Gastrocnemius medialis (tissue), 4 donors: ENCODE measurements at regions of chr11 and their contacts with region 1.

Region 1: GRCh38 chr11:88292171-88292843 is 45.2 kb downstream of the CTSC start:
- DNase-seq: no peak
- ATAC-seq: peak in 1 of 2 donors; percentile 46
- H3K4me3 ChIP-seq: no peak overlapping the region
- H3K27ac ChIP-seq: peak overlapping the region in 1 of 4 donors; percentile 10
- H3K4me1 ChIP-seq: peaks cover 20 to 34% of the 10 kb centered on the region in 2 donors
- H3K27me3 ChIP-seq: no peaks in the 10 kb centered on the region
- CTCF ChIP-seq: no peak
- POLR2A ChIP-seq: no peak

Region 2: DNA sequence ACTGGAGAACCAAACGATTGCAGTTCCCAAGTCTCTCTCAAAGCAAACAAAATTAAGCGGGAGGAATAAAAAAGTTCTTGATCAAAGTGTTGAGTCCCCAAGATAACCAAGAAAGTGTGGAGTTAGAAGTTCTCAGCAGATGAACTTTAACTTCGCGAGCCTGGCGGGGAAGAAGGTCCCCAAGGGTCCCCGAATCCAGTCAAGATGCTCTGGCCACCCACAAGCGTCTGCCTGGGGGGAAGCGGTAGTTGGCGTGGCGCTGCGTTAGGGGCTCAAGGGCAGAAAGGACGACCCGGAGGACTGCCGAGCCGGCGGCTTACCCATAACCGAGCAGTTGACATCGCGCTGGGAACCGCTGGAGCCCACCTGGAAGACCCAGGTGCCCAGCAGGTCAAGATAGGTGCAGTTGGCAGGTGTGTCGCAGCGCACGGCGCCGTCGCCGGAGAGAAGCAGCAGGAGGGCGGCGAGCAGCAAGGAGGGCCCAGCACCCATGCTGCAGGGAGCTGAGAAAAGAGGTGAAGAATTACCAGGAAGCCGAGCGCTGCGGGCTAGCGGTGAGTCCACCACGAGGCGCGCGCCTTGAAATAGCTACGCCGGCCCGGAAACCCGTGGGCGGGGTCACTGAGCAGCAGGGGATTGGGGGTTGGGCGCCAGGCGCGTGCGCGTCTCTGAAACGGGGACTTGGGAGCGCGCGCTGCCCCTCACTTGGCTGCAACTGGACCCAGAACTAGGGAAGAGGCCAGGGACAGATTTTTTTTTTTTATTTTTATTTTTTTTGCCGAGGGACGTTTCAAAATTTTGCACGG is 45.1 kb after region 1 on chr11 and contains the start of gene CTSC:
- in situ Hi-C with region 1: no loop called
- intact Hi-C with region 1: loop called (anchors 5 kb)
- DNase-seq: peak; percentile 89 to 90
- ATAC-seq: peak; percentile 87 to 90
- H3K4me3 ChIP-seq: peak within 1 kb of the TSS; percentile 69 to 94 (median 88)
- H3K27ac ChIP-seq: peak within 1 kb of the TSS; percentile 81 to 89 (median 86)
- H3K4me1 ChIP-seq: peaks cover 5 to 13% of the 10 kb centered on the region in 2 donors
- H3K27me3 ChIP-seq: no peaks in the 10 kb centered on the region
- CTCF ChIP-seq: peak in 1 of 5 experiments; percentile 18
- POLR2A ChIP-seq: peak; percentile 62 to 66
- total RNA-seq, gene CTSC: 7.0 to 16.7 (median 13.5) TPM

Region 3: DNA sequence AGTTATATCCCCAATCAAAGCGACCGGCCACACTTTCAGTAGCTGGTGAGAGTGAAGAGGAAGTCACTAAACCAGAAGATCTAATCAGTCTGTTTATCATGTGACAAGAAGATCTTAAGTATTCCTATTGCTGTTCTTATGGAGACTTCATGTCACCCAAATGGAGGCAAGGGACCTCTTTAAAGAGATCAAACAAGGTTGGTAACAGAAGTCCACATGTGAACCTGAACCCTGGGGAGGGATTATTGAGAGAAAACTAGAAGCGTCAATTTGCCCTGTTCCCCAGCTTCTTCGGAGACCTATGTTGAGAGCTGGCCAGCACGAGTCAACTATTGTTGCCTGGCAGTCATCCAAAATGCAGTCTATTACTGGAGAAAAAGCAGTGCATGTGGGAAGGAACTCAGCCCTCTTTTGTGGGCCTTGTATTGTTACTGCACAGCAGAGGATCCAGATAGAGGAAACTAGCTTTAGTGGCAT is 122.1 kb after region 1 on chr11:
- in situ Hi-C with region 1: no loop called
- intact Hi-C with region 1: no loop called
- DNase-seq: peak in 1 of 2 donors; percentile 23
- ATAC-seq: peak in 1 of 2 donors; percentile 18
- H3K4me3 ChIP-seq: no peak overlapping the region
- H3K27ac ChIP-seq: no peak overlapping the region
- H3K4me1 ChIP-seq: no peaks in the 10 kb centered on the region
- H3K27me3 ChIP-seq: no peaks in the 10 kb centered on the region
- CTCF ChIP-seq: no peak
- POLR2A ChIP-seq: no peak